A673 (cell line): ENCODE measurements at regions of chr5 and their contacts with region 1.

Region 1: GRCh38 chr5:109329333-109330237 is 80.2 kb downstream of the PJA2 start:
- DNase-seq: no peak
- H3K4me3 ChIP-seq: no peak overlapping the region
- H3K27ac ChIP-seq: no peak overlapping the region
- H3K4me1 ChIP-seq: no peaks in the 10 kb centered on the region
- H3K27me3 ChIP-seq: no peaks in the 10 kb centered on the region
- CTCF ChIP-seq: no peak

Region 2: GRCh38 chr5:108461628-108462367 is 867.8 kb before region 1 on chr5:
- CTCF ChIA-PET with region 1: no interaction called
- POLR2A ChIA-PET with region 1: interaction called, 15 read pairs
- intact Hi-C with region 1: no loop called
- DNase-seq: peak; percentile 12
- H3K4me3 ChIP-seq: no peak overlapping the region
- H3K27ac ChIP-seq: no peak overlapping the region
- H3K4me1 ChIP-seq: no peaks in the 10 kb centered on the region
- H3K27me3 ChIP-seq: no peaks in the 10 kb centered on the region
- CTCF ChIP-seq: no peak

Region 3: GRCh38 chr5:109668668-109669422 is 339.3 kb after region 1 on chr5:
- CTCF ChIA-PET with region 1: no interaction called
- POLR2A ChIA-PET with region 1: no interaction called
- intact Hi-C with region 1: no loop called
- DNase-seq: no peak
- H3K4me3 ChIP-seq: no peak overlapping the region
- H3K27ac ChIP-seq: no peak overlapping the region
- H3K4me1 ChIP-seq: no peaks in the 10 kb centered on the region
- H3K27me3 ChIP-seq: no peaks in the 10 kb centered on the region
- CTCF ChIP-seq: no peak